HCT116 (cell line): ENCODE measurements at regions of chr2 and their contacts with region 1.

Region 1: DNA sequence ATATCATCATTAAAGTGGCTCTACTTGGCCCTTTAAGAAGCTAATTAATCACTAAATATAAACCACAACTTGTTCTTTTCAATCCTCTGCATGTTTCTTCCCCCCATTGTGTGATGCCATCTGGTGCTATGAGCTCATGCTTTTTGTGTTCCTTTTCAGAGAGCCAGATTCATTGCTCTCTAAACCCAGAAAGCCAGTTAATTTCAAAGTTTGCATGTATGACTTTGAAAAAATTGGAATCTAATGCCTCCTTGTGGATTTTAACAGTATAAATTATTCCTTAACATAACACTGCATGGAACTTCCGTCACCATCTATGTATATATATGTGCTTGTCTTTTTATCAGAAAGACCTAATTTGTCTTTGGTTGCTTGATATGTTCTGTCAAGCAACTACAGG is 31.1 kb downstream of the TMEM178A start:
- DNase-seq: no peak
- ATAC-seq: peak; percentile 60; the same call in 1 of the 2 replicates
- H3K4me3 ChIP-seq: no peak overlapping the region
- H3K27ac ChIP-seq: no peak overlapping the region
- H3K4me1 ChIP-seq: no peaks in the 10 kb centered on the region
- H3K27me3 ChIP-seq: no peaks in the 10 kb centered on the region
- CTCF ChIP-seq: peak; percentile 11 to 32 (median 23); a peak in 3 of 6 replicates
- POLR2A ChIP-seq: no peak
- RAD21 ChIP-seq: peak; percentile 58

Region 2: DNA sequence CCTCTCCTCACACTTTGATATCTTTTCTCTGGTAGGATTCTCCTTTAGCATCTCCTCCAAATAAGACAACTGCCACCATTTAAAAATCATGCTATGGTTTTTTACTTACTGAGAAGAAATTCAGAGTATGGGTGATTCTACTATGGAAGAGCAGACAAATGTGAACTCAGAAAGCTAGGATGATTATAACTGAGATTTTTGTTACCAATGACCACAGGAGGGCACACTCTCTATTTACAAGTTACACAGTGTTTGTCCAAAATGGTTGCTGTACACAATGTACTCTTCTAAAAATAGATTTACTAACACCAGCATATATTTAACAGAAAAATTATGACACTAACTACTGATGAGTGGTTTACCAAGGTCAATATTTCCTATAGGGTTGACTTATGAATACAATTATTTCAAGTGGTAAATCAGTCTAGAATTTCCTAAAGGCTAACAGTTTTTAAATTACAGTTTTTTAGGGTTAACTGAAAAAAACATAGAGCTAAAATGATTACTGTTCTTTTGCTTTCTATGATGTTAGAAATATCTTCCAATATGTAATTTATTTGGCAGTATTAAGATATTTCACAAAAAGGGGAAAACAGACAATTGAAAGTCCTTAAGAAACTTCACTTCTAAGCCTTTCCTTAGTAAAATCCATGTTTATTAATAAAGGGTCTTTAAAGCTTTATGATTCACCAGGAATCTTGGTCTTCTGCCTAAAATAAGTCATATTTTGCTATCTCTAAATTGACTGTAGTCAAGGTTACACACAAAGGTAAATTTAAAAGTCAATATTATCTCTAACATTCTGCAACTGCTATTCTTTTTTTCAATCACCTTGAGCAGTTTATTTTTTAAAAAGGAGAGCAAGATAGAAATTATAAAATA is 317.0 kb before region 1 on chr2:
- CTCF ChIA-PET with region 1: interaction called, 20 read pairs
- POLR2A ChIA-PET with region 1: no interaction called
- RAD21 ChIA-PET with region 1: interaction called in 1 of 2 experiments, 3 read pairs
- intact Hi-C with region 1: no loop called
- DNase-seq: peak; percentile 12
- ATAC-seq: peak; percentile 78
- H3K4me3 ChIP-seq: no peak overlapping the region
- H3K27ac ChIP-seq: no peak overlapping the region
- H3K4me1 ChIP-seq: no peaks in the 10 kb centered on the region
- H3K27me3 ChIP-seq: no peaks in the 10 kb centered on the region
- CTCF ChIP-seq: peak; percentile 43 to 71 (median 47); a peak in 5 of 6 replicates
- POLR2A ChIP-seq: no peak
- RAD21 ChIP-seq: peak; percentile 76

Region 3: DNA sequence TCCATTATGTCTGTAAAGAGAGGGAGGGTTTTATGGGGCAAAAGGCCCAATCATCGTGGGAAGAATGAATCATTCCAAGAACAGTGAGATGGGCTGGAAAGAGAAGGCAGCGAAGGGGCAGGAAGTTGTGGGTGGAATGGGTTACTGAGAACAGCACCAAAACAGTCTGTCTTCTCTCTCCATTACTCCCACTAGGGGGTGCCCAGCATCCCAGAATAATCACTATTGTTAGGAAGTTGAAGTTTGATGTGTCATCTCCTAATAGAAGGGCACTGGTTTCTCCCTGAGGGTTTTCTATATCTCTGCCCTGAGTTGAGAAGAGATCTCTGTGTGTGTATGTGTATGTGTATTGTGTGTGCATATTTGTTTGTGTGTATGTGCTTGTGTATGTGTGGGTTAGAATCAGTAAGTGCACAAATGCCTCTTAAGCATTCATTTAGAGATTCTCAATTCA is 183.2 kb before region 1 on chr2:
- CTCF ChIA-PET with region 1: no interaction called
- POLR2A ChIA-PET with region 1: no interaction called
- RAD21 ChIA-PET with region 1: no interaction called
- intact Hi-C with region 1: loop called (anchors 10 kb)
- DNase-seq: peak; percentile 32
- ATAC-seq: peak; percentile 95
- H3K4me3 ChIP-seq: no peak overlapping the region
- H3K27ac ChIP-seq: no peak overlapping the region
- H3K4me1 ChIP-seq: peaks cover 0 to 11% of the 10 kb centered on the region in 2 experiments; a peak in 2 of 4 replicates
- H3K27me3 ChIP-seq: no peaks in the 10 kb centered on the region
- CTCF ChIP-seq: peak; percentile 67 to 71 (median 68); a peak in 5 of 6 replicates
- POLR2A ChIP-seq: no peak
- RAD21 ChIP-seq: peak; percentile 74

Region 4: DNA sequence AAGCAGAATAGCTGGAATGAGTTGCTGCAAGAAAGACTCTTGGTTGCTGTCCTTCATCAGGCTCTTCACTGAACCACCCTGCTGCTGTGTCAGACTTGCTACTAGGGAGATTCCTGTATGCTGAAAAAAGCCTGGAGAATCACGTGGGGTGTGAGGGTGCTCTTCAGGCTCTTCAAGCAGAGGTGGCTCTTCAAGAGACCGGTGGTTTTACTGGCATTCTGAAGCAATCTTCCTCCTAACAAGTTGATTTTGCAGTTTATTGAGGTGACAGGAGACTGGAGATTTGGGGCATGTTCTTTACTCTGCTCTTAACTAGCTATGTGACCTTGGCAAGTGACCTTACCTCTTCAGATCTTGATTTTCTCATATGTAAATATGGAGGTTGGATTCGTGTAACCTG is 17.0 kb before region 1 on chr2:
- CTCF ChIA-PET with region 1: no interaction called
- POLR2A ChIA-PET with region 1: no interaction called
- RAD21 ChIA-PET with region 1: no interaction called
- intact Hi-C with region 1: no loop called
- DNase-seq: no peak
- ATAC-seq: no peak
- H3K4me3 ChIP-seq: no peak overlapping the region
- H3K27ac ChIP-seq: no peak overlapping the region
- H3K4me1 ChIP-seq: no peaks in the 10 kb centered on the region
- H3K27me3 ChIP-seq: peaks cover 10% of the 10 kb centered on the region; the same call in 1 of the 2 replicates
- CTCF ChIP-seq: no peak
- POLR2A ChIP-seq: no peak
- RAD21 ChIP-seq: no peak